Stomach (tissue), 19 donors: ENCODE measurements at regions of chr16 and their contacts with region 1.

Region 1: GRCh38 chr16:80540516-80541272 is at the start of gene DYNLRB2:
- DNase-seq: peak; percentile 95 to 98
- H3K4me3 ChIP-seq: peak within 1 kb of the TSS; percentile 65 to 74 (median 68)
- H3K27ac ChIP-seq: peak within 1 kb of the TSS; percentile 62 to 82 (median 80)
- H3K4me1 ChIP-seq: peaks cover 0 to 13% (median 8%) of the 10 kb centered on the region in 4 donors
- H3K27me3 ChIP-seq: peaks cover 0 to 8% (median 0%) of the 10 kb centered on the region in 3 donors
- CTCF ChIP-seq: peak in 1 of 7 experiments; percentile 5
- EP300 ChIP-seq: peak; percentile 6
- POLR2A ChIP-seq: no peak
- total RNA-seq, gene DYNLRB2: not detected

Region 2: GRCh38 chr16:80459331-80459777 is 81.3 kb before region 1 on chr16:
- intact Hi-C with region 1: no loop called
- DNase-seq: peak in 1 of 2 donors; percentile 76
- H3K4me3 ChIP-seq: no peak overlapping the region
- H3K27ac ChIP-seq: no peak overlapping the region
- H3K4me1 ChIP-seq: peaks cover 0 to 10% (median 3%) of the 10 kb centered on the region in 4 donors
- H3K27me3 ChIP-seq: no peaks in the 10 kb centered on the region
- CTCF ChIP-seq: no peak
- EP300 ChIP-seq: no peak
- POLR2A ChIP-seq: no peak

Region 3: GRCh38 chr16:80778707-80779106 is 238.0 kb after region 1 on chr16:
- intact Hi-C with region 1: no loop called
- DNase-seq: no peak
- H3K4me3 ChIP-seq: no peak overlapping the region
- H3K27ac ChIP-seq: no peak overlapping the region
- H3K4me1 ChIP-seq: no peaks in the 10 kb centered on the region
- H3K27me3 ChIP-seq: no peaks in the 10 kb centered on the region
- CTCF ChIP-seq: no peak
- EP300 ChIP-seq: no peak
- POLR2A ChIP-seq: no peak

Region 4: GRCh38 chr16:80804056-80804450 is 263.4 kb after region 1 on chr16:
- intact Hi-C with region 1: loop called (anchors 10 kb)
- DNase-seq: peak in 1 of 2 donors; percentile 83
- H3K4me3 ChIP-seq: peak overlapping the region; percentile 60 to 77 (median 68)
- H3K27ac ChIP-seq: peak overlapping the region in 4 of 5 donors; percentile 58 to 91 (median 71)
- H3K4me1 ChIP-seq: peaks cover 3 to 12% (median 5%) of the 10 kb centered on the region in 4 donors
- H3K27me3 ChIP-seq: peaks cover 0 to 6% (median 0%) of the 10 kb centered on the region in 3 donors
- CTCF ChIP-seq: no peak
- EP300 ChIP-seq: no peak
- POLR2A ChIP-seq: no peak

Region 5: GRCh38 chr16:81668243-81669097 is 1127.8 kb after region 1 on chr16:
- intact Hi-C with region 1: no loop called
- DNase-seq: no peak
- H3K4me3 ChIP-seq: no peak overlapping the region
- H3K27ac ChIP-seq: peak overlapping the region in 3 of 5 donors; percentile 38 to 66 (median 59)
- H3K4me1 ChIP-seq: peaks cover 0 to 26% (median 6%) of the 10 kb centered on the region in 4 donors
- H3K27me3 ChIP-seq: no peaks in the 10 kb centered on the region
- CTCF ChIP-seq: no peak
- EP300 ChIP-seq: no peak
- POLR2A ChIP-seq: no peak